ENCODE measurements at regions of chr2 and their contacts with region 1.

Region 1: GRCh38 chr2:1675633-1676032 is 68.7 kb downstream of the PXDN start:
- DNase-seq: peak; percentile 99
- H3K4me3 ChIP-seq: no peak overlapping the region
- H3K27ac ChIP-seq: peak overlapping the region; percentile 84
- H3K4me1 ChIP-seq: peaks cover 20% of the 10 kb centered on the region
- H3K27me3 ChIP-seq: no peaks in the 10 kb centered on the region
- CTCF ChIP-seq: peak; percentile 62 to 83

Region 2: DNA sequence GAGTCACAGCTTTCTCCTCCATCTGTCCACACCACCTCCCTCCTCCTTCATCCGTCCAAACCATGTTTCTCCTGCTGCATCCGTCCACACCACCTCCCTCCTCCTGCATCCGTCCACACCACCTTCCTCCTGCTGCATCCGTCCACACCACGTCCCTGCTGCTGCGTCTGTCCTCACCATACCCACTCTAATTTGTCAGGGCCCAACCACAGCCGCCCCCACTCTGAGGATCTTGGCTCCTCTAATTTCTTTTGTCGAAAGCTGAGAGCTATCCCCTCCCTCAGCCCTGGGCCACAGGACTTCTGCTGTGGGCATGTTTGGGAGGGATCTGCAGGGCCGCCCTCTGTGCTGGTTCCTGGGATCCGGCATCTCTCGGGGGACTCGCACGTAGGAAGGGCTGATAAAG is 195.0 kb before region 1 on chr2:
- CTCF ChIA-PET with region 1: no interaction called
- dilution Hi-C with region 1: no loop called
- in situ Hi-C with region 1: no loop called
- intact Hi-C with region 1: no loop called
- DNase-seq: no peak
- H3K4me3 ChIP-seq: no peak overlapping the region
- H3K27ac ChIP-seq: no peak overlapping the region
- H3K4me1 ChIP-seq: no peaks in the 10 kb centered on the region
- H3K27me3 ChIP-seq: no peaks in the 10 kb centered on the region
- CTCF ChIP-seq: no peak

Region 3: GRCh38 chr2:1625208-1625937 is 50.3 kb before region 1 on chr2:
- CTCF ChIA-PET with region 1: no interaction called
- dilution Hi-C with region 1: loop called (anchors 5 kb)
- in situ Hi-C with region 1: no loop called
- intact Hi-C with region 1: loop called (anchors 1 kb)
- DNase-seq: peak; percentile 100
- H3K4me3 ChIP-seq: no peak overlapping the region
- H3K27ac ChIP-seq: peak overlapping the region; percentile 74
- H3K4me1 ChIP-seq: peaks cover 26% of the 10 kb centered on the region
- H3K27me3 ChIP-seq: no peaks in the 10 kb centered on the region
- CTCF ChIP-seq: no peak

Region 4: GRCh38 chr2:1631804-1632348 is 43.8 kb before region 1 on chr2:
- CTCF ChIA-PET with region 1: no interaction called
- dilution Hi-C with region 1: loop called (anchors 5 kb)
- in situ Hi-C with region 1: no loop called
- intact Hi-C with region 1: no loop called
- DNase-seq: no peak
- H3K4me3 ChIP-seq: no peak overlapping the region
- H3K27ac ChIP-seq: no peak overlapping the region
- H3K4me1 ChIP-seq: peaks cover 16% of the 10 kb centered on the region
- H3K27me3 ChIP-seq: no peaks in the 10 kb centered on the region
- CTCF ChIP-seq: no peak

Region 5: GRCh38 chr2:1653956-1654695 is 21.5 kb before region 1 on chr2:
- CTCF ChIA-PET with region 1: no interaction called
- dilution Hi-C with region 1: no loop called
- in situ Hi-C with region 1: no loop called
- intact Hi-C with region 1: loop called (anchors 2 kb)
- DNase-seq: no peak
- H3K4me3 ChIP-seq: no peak overlapping the region
- H3K27ac ChIP-seq: peak overlapping the region; percentile 60
- H3K4me1 ChIP-seq: peaks cover 31% of the 10 kb centered on the region
- H3K27me3 ChIP-seq: no peaks in the 10 kb centered on the region
- CTCF ChIP-seq: no peak

Region 6: GRCh38 chr2:1707771-1708418 is 32.3 kb after region 1 on chr2:
- CTCF ChIA-PET with region 1: no interaction called
- dilution Hi-C with region 1: no loop called
- in situ Hi-C with region 1: no loop called
- intact Hi-C with region 1: loop called (anchors 2 kb)
- DNase-seq: peak; percentile 99
- H3K4me3 ChIP-seq: peak overlapping the region in 2 of 3 experiments; percentile 4 to 26
- H3K27ac ChIP-seq: peak overlapping the region; percentile 97
- H3K4me1 ChIP-seq: peaks cover 45% of the 10 kb centered on the region
- H3K27me3 ChIP-seq: no peaks in the 10 kb centered on the region
- CTCF ChIP-seq: no peak

Region 7: DNA sequence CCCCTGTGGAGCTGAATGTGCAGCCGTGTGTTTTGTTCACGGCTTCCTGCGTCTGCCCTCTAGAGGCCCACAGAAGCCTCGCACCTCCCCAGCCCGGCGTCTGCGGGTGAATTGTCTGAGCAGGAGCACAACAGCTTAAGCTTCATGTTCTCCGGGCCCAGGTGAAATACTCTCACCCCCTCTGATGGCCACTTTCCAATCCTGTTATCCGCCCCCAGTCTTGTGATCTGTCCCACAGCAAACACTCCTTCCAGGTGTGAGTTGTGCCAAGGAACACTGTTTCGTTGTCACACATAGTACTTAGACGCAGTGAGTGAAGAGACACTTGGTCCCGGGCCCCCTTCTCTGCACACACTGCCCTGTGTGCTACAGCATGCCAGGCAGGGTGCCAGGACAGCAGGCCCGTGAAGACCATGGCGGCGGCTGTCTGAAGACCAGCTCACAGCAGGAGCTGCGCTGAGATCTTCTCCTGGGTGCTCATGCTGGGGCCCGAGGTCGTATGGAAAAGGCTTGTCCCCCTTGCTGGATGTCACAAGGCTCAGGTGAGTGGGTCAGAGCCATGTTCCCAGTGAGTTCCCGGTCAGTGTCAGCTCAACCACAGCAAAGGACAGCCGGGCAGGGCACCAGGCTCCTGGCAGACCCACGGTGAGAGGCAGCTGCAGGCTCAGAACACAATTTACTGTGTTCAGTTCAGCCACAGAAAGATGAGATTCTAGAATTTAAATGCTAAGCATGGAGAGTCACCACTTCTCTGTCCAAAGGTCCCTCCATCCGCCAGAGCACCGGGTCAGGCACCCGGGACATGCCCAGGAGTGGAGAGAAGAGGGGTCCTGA is 75.5 kb after region 1 on chr2:
- CTCF ChIA-PET with region 1: interaction called, 4 read pairs
- dilution Hi-C with region 1: no loop called
- in situ Hi-C with region 1: no loop called
- intact Hi-C with region 1: loop called (anchors 2 kb)
- DNase-seq: peak; percentile 68
- H3K4me3 ChIP-seq: no peak overlapping the region
- H3K27ac ChIP-seq: no peak overlapping the region
- H3K4me1 ChIP-seq: peaks cover 5% of the 10 kb centered on the region
- H3K27me3 ChIP-seq: no peaks in the 10 kb centered on the region
- CTCF ChIP-seq: peak; percentile 80 to 92

Region 8: GRCh38 chr2:1791685-1792435 is 116.2 kb after region 1 on chr2:
- CTCF ChIA-PET with region 1: no interaction called
- dilution Hi-C with region 1: no loop called
- in situ Hi-C with region 1: no loop called
- intact Hi-C with region 1: no loop called
- DNase-seq: peak; percentile 11
- H3K4me3 ChIP-seq: no peak overlapping the region
- H3K27ac ChIP-seq: no peak overlapping the region
- H3K4me1 ChIP-seq: no peaks in the 10 kb centered on the region
- H3K27me3 ChIP-seq: no peaks in the 10 kb centered on the region
- CTCF ChIP-seq: no peak

Region 9: GRCh38 chr2:1817256-1818051 is 141.8 kb after region 1 on chr2:
- CTCF ChIA-PET with region 1: no interaction called
- dilution Hi-C with region 1: no loop called
- in situ Hi-C with region 1: no loop called
- intact Hi-C with region 1: loop called (anchors 5 kb)
- DNase-seq: peak; percentile 81
- H3K4me3 ChIP-seq: no peak overlapping the region
- H3K27ac ChIP-seq: no peak overlapping the region
- H3K4me1 ChIP-seq: peaks cover 8% of the 10 kb centered on the region
- H3K27me3 ChIP-seq: no peaks in the 10 kb centered on the region
- CTCF ChIP-seq: peak; percentile 89 to 98

Measured in mammary epithelial cell (primary cell).